Panc1 (cell line): ENCODE measurements at regions of chr2 and their contacts with region 1.

Region 1: DNA sequence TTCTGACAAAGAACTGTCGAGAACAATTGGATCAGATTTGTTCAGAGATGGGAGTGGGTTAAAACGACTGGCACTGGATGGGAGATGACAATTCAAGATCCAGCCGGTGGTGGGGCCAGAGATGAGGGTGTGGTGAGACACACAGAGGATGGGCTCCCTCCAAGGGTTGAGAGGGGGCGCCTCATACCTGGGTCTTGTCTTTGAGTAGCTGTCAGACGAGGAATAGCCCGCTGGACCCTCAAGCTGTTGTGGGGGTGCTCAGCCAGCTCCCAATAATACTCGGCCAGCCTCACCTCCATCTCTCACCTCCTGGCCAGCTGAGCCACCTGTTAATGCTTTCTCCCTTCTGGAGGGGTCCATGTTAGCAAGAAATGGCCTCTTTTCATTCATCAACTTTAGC is 14.0 kb downstream of the INPP5D start:
- DNase-seq: no peak
- ATAC-seq: no peak
- H3K4me3 ChIP-seq: no peak overlapping the region
- H3K27ac ChIP-seq: no peak overlapping the region
- H3K4me1 ChIP-seq: no peaks in the 10 kb centered on the region
- H3K27me3 ChIP-seq: no peaks in the 10 kb centered on the region
- CTCF ChIP-seq: no peak

Region 2: DNA sequence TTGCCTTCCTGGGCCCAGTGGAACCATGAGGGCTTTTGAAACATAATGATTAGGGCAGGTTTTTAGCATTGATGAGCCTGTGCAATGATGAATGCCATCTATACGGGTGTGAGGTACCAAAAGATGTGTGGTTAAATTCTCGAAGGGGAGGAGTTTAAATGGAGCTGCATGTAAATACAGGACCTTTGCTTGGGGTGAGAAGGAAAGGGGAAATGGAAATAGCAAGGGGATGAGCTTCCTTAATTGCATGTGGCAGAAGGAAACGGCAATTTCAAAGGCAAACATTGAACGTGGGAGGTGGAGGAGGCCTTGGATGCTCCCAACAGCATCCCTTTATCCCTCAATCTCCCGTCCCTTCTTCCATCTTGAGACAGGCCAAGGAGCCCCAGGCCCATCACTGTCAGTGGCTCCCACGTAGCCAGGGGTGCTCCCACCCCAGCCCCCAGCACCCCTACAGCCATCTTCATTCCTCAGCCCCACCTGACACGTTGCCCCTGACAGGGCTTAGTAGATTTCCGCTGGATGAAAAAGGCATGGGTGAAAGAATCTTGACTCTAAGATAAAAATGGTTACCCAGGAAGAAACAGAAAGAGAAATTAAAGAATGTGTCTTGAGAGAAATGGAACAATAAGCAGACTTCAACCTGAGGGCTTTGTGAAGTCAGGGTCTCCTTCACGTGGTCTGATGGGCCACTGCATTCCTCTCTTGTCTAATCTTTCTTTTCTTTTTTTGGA is 18.5 kb after region 1 on chr2:
- CTCF ChIA-PET with region 1: no interaction called
- POLR2A ChIA-PET with region 1: no interaction called
- in situ Hi-C with region 1: no loop called
- intact Hi-C with region 1: no loop called
- DNase-seq: no peak
- ATAC-seq: no peak
- H3K4me3 ChIP-seq: no peak overlapping the region
- H3K27ac ChIP-seq: no peak overlapping the region
- H3K4me1 ChIP-seq: no peaks in the 10 kb centered on the region
- H3K27me3 ChIP-seq: no peaks in the 10 kb centered on the region
- CTCF ChIP-seq: no peak

Region 3: GRCh38 chr2:233105930-233106329 is 31.8 kb after region 1 on chr2:
- CTCF ChIA-PET with region 1: no interaction called
- POLR2A ChIA-PET with region 1: interaction called, 11 read pairs
- in situ Hi-C with region 1: no loop called
- intact Hi-C with region 1: no loop called
- DNase-seq: no peak
- ATAC-seq: no peak
- H3K4me3 ChIP-seq: no peak overlapping the region
- H3K27ac ChIP-seq: no peak overlapping the region
- H3K4me1 ChIP-seq: no peaks in the 10 kb centered on the region; the same call in 1 of the 2 replicates
- H3K27me3 ChIP-seq: no peaks in the 10 kb centered on the region
- CTCF ChIP-seq: no peak

Region 4: GRCh38 chr2:233244818-233245217 is 170.7 kb after region 1 on chr2:
- CTCF ChIA-PET with region 1: interaction called, 14 read pairs
- POLR2A ChIA-PET with region 1: no interaction called
- in situ Hi-C with region 1: no loop called
- intact Hi-C with region 1: no loop called
- DNase-seq: no peak
- ATAC-seq: no peak
- H3K4me3 ChIP-seq: no peak overlapping the region
- H3K27ac ChIP-seq: no peak overlapping the region
- H3K4me1 ChIP-seq: peaks cover 10% of the 10 kb centered on the region; the same call in 1 of the 2 replicates
- H3K27me3 ChIP-seq: no peaks in the 10 kb centered on the region
- CTCF ChIP-seq: no peak

Region 5: GRCh38 chr2:233418761-233419625 is 344.9 kb after region 1 on chr2:
- CTCF ChIA-PET with region 1: no interaction called
- POLR2A ChIA-PET with region 1: no interaction called
- in situ Hi-C with region 1: no loop called
- intact Hi-C with region 1: no loop called
- DNase-seq: no peak
- ATAC-seq: peak; percentile 61
- H3K4me3 ChIP-seq: peak overlapping the region; percentile 24 to 68
- H3K27ac ChIP-seq: peak overlapping the region; percentile 80
- H3K4me1 ChIP-seq: peaks cover 94% of the 10 kb centered on the region
- H3K27me3 ChIP-seq: no peaks in the 10 kb centered on the region
- CTCF ChIP-seq: no peak